ENCODE measurements at regions of chr12 and their contacts with region 1.

Region 1: GRCh38 chr12:122836027-122836921 is 1.0 kb downstream of the HIP1R start:
- DNase-seq: peak; percentile 45 to 77 (median 66)
- ATAC-seq: peak; percentile 56 to 70 (median 59)
- H3K4me3 ChIP-seq: peak overlapping the region; percentile 77 to 91
- H3K4me3 Mint-ChIP-seq: peak overlapping the region; percentile 94 to 98 (median 97)
- H3K27ac ChIP-seq: peak overlapping the region; percentile 70
- H3K27ac Mint-ChIP-seq: peak overlapping the region; percentile 93 to 95
- H3K4me1 ChIP-seq: peaks cover 18 to 29% of the 10 kb centered on the region in 2 experiments
- H3K4me1 Mint-ChIP-seq: peaks cover 52 to 56% (median 52%) of the 10 kb centered on the region in 3 donors
- H3K27me3 ChIP-seq: no peaks in the 10 kb centered on the region
- H3K27me3 Mint-ChIP-seq: no peaks in the 10 kb centered on the region

Region 2: DNA sequence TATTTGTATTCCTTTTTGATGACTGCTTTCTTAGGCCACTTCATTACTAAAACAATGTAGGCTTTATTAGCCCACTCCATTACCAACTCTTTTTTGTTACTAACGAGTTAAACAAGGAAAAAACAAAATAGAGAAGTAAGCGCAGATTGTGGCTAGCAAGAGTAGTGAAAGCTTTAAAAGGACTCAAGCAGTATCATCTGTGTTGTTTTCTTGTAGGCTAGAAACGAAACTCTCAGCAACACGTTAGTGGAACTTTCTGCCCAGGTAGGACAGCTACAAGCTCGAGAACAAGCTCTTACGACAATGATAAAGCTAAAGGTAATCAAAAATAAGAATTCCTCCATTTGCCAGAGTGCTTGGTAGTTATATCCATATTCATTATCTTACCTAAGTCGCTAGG is 50.8 kb before region 1 on chr12:
- CTCF ChIA-PET with region 1: no interaction called
- POLR2A ChIA-PET with region 1: no interaction called
- DNase-seq: no peak
- ATAC-seq: no peak
- H3K4me3 ChIP-seq: no peak overlapping the region
- H3K4me3 Mint-ChIP-seq: no peak overlapping the region
- H3K27ac ChIP-seq: no peak overlapping the region
- H3K27ac Mint-ChIP-seq: no peak overlapping the region
- H3K4me1 ChIP-seq: no peaks in the 10 kb centered on the region
- H3K4me1 Mint-ChIP-seq: no peaks in the 10 kb centered on the region
- H3K27me3 ChIP-seq: no peaks in the 10 kb centered on the region
- H3K27me3 Mint-ChIP-seq: no peaks in the 10 kb centered on the region

Region 3: DNA sequence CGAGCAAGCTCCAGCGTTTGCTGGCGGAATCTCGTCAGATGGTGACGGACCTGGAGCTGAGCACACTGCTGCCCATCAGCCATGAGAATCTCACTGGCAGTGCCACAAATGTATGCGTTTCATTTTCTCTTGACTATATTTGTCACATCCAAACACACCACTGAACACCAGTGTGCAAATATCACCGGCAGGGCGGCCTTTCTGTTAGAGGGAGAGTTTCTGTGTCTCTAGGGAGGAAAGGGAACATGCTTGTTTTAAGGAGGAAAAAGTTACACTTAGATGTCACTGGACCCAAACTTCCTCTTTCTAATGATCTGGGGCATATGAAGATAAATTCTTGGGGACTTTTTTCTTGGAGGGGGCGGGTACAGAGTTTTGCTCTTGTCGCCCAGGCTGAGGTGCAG is 23.0 kb before region 1 on chr12:
- CTCF ChIA-PET with region 1: no interaction called
- POLR2A ChIA-PET with region 1: interaction called in 1 of 2 experiments, 14 read pairs
- DNase-seq: no peak
- ATAC-seq: no peak
- H3K4me3 ChIP-seq: no peak overlapping the region
- H3K4me3 Mint-ChIP-seq: no peak overlapping the region
- H3K27ac ChIP-seq: no peak overlapping the region
- H3K27ac Mint-ChIP-seq: no peak overlapping the region
- H3K4me1 ChIP-seq: no peaks in the 10 kb centered on the region
- H3K4me1 Mint-ChIP-seq: peaks cover 0 to 2% (median 0%) of the 10 kb centered on the region in 3 donors
- H3K27me3 ChIP-seq: no peaks in the 10 kb centered on the region
- H3K27me3 Mint-ChIP-seq: no peaks in the 10 kb centered on the region

Region 4: GRCh38 chr12:123043536-123044001 is 207.3 kb after region 1 on chr12:
- CTCF ChIA-PET with region 1: no interaction called
- POLR2A ChIA-PET with region 1: no interaction called
- DNase-seq: peak; percentile 47 to 83 (median 67)
- ATAC-seq: peak; percentile 95 to 97 (median 96)
- H3K4me3 ChIP-seq: peak overlapping the region in 1 of 2 donors; percentile 30
- H3K4me3 Mint-ChIP-seq: peak overlapping the region in 2 of 3 donors; percentile 9 to 24
- H3K27ac ChIP-seq: peak overlapping the region; percentile 38
- H3K27ac Mint-ChIP-seq: peak overlapping the region; percentile 72 to 82
- H3K4me1 ChIP-seq: peaks cover 12 to 23% of the 10 kb centered on the region in 2 experiments
- H3K4me1 Mint-ChIP-seq: peaks cover 29 to 61% (median 38%) of the 10 kb centered on the region in 3 donors
- H3K27me3 ChIP-seq: no peaks in the 10 kb centered on the region
- H3K27me3 Mint-ChIP-seq: no peaks in the 10 kb centered on the region